Endothelial cell of umbilical vein (primary cell): ENCODE measurements at regions of chr9 and their contacts with region 1.

Region 1: GRCh38 chr9:100598641-100599145 is 20.8 kb downstream of the CAVIN4 start:
- DNase-seq: peak; percentile 77
- H3K4me3 ChIP-seq: peak overlapping the region; percentile 40 to 70 (median 41)
- H3K27ac ChIP-seq: no peak overlapping the region
- H3K4me1 ChIP-seq: peaks cover 12% of the 10 kb centered on the region
- H3K27me3 ChIP-seq: no peaks in the 10 kb centered on the region
- CTCF ChIP-seq: no peak
- POLR2A ChIP-seq: peak; percentile 74

Region 2: DNA sequence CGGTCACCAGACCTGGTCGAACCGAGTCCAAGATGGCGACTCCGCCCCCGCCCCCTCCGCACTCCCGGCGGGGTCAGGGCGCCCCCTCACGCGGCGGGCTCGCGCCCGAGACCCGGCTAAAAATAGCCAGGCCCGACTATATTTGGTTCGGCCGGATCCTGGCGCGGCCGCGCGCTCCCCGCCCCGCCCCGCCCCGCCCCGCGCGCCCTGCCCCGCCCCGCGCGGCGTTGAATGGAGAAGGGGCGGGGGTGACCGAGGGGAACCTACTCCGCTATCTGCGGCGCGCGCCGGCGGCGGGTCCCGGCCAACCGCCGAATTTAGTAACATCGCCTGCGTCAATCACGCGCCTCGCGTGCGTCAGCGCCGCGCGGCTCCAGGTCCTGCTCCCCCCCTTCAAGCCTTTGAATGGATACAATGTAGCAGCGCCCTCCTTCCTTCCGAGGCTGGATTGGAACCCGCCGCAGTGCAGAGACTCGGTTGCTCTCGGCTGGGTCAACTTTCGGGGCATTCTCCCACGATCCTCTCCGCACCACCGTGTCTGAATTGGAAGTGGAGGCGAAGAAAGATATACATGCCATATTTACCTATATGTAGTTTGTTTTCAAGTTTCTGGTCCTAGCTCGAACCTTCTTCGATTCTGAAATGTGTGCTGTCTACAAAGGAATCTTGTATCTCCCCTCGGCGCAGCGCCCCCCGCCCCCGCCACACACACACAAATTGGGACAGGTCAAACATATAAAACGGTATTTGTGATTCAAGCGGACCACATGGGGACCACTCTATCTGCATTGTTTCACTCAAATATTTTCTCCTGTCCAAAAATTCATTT is 778.6 kb before region 1 on chr9:
- CTCF ChIA-PET with region 1: interaction called, 4 read pairs
- POLR2A ChIA-PET with region 1: no interaction called
- dilution Hi-C with region 1: no loop called
- intact Hi-C with region 1: loop called (anchors 5 kb)
- DNase-seq: peak; percentile 93
- H3K4me3 ChIP-seq: peak overlapping the region; percentile 47 to 82 (median 78)
- H3K27ac ChIP-seq: peak overlapping the region; percentile 75
- H3K4me1 ChIP-seq: peaks cover 25% of the 10 kb centered on the region
- H3K27me3 ChIP-seq: peaks cover 8% of the 10 kb centered on the region in 2 experiments
- CTCF ChIP-seq: peak; percentile 4 to 9
- POLR2A ChIP-seq: no peak

Region 3: DNA sequence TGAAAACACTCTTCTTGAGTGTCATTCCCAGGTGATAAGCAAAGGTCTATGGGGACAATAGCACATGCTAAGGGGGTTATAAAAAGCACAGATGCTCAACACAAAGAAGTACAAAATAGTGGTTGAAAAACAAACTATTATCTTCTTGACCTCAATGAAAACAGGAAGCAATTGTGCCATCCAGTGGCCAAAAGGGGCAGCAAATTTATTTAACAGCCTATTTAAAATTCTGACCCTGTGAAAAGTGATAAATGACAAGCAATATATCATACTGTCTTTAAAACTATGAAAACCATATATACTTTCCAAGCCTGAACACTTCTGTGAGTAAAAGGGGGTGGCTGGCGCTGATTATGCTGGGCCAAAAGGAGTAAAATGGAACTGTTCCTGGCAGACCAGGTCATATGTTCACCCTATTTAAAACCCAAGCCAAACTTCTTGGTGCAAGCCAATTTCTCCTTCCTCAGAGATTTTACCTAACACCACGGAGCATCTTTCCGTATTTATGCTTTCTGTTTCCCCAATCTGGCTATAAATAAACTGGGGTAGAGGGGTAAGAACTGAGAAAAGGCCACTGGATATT is 275.6 kb before region 1 on chr9:
- CTCF ChIA-PET with region 1: interaction called, 42 read pairs
- POLR2A ChIA-PET with region 1: no interaction called
- dilution Hi-C with region 1: no loop called
- intact Hi-C with region 1: loop called (anchors 1 kb)
- DNase-seq: peak; percentile 52
- H3K4me3 ChIP-seq: no peak overlapping the region
- H3K27ac ChIP-seq: no peak overlapping the region
- H3K4me1 ChIP-seq: no peaks in the 10 kb centered on the region
- H3K27me3 ChIP-seq: no peaks in the 10 kb centered on the region
- CTCF ChIP-seq: peak; percentile 38 to 50
- POLR2A ChIP-seq: no peak

Region 4: DNA sequence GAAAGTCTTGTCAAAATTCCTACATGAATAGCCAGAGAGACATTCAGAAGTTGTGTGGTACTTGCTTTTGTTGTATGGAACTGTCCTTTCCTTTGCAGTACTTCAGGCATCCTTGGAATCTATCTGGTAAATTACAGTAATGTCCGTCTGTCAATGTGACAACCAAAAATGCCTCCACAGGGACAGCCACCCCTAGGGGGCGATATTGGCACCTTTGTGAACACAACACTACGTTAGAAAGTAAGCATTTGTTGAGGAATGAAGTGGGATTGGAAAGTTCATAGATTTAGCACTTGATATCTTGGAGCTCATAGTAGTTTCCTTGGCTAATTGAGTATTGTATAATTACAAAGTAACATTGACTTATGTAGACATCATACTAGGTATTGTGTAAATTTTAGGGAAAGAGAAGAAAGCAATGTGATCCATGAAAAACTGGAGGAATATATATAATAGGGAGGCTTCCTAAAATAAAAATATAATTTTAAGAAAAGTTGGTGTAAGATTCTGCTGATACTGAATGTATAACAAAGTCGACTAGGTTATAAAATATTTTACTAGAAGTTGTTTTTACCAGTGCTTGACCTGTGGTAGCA is 93.0 kb before region 1 on chr9:
- CTCF ChIA-PET with region 1: interaction called, 12 read pairs
- POLR2A ChIA-PET with region 1: no interaction called
- dilution Hi-C with region 1: no loop called
- intact Hi-C with region 1: loop called (anchors 1 kb)
- DNase-seq: peak; percentile 61
- H3K4me3 ChIP-seq: no peak overlapping the region
- H3K27ac ChIP-seq: no peak overlapping the region
- H3K4me1 ChIP-seq: peaks cover 8% of the 10 kb centered on the region
- H3K27me3 ChIP-seq: no peaks in the 10 kb centered on the region
- CTCF ChIP-seq: peak; percentile 65 to 78
- POLR2A ChIP-seq: no peak

Region 5: GRCh38 chr9:100561256-100561655 is 37.4 kb before region 1 on chr9:
- CTCF ChIA-PET with region 1: no interaction called
- POLR2A ChIA-PET with region 1: no interaction called
- dilution Hi-C with region 1: no loop called
- intact Hi-C with region 1: no loop called
- DNase-seq: no peak
- H3K4me3 ChIP-seq: no peak overlapping the region
- H3K27ac ChIP-seq: no peak overlapping the region
- H3K4me1 ChIP-seq: no peaks in the 10 kb centered on the region
- H3K27me3 ChIP-seq: no peaks in the 10 kb centered on the region
- CTCF ChIP-seq: no peak
- POLR2A ChIP-seq: no peak

Region 6: DNA sequence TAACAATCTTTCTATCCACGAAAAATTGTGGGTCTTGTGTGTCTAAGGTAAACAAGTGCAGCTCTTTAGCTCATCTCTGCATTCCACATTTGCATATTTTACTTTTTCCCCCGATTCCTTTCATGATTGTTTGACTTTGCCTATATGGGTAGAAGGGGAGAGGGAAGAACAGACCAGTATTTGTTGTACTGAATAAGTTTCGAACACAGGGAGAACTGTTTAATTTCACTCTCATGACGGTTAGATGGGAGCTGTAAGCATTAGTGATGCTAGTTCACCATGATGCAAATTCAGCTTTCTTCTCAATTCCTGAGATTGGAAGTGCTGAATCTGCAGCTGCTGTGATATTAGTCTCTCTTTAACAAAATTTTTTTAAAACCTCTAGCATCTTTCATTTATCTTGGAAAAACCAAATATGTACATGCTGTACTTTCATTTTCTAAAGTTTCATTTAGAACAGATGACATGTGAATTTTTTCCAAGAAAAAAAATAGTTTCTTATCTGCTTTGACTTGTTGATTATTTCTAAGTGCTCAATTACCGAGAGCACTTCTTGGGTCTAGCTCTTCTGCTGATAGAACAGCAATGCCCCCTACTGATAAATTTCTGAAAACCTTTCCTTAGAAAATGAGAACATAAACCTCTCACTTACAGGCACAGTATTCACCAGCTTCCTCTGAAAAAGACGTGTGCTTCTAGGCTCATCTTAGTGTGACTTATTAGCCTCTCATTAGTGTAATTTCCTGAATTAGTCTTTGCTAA is 636.6 kb after region 1 on chr9:
- CTCF ChIA-PET with region 1: interaction called, 59 read pairs
- POLR2A ChIA-PET with region 1: no interaction called
- dilution Hi-C with region 1: no loop called
- intact Hi-C with region 1: loop called (anchors 1 kb)
- DNase-seq: peak; percentile 58
- H3K4me3 ChIP-seq: no peak overlapping the region
- H3K27ac ChIP-seq: no peak overlapping the region
- H3K4me1 ChIP-seq: no peaks in the 10 kb centered on the region
- H3K27me3 ChIP-seq: no peaks in the 10 kb centered on the region
- CTCF ChIP-seq: peak; percentile 14 to 38
- POLR2A ChIP-seq: no peak

Region 7: DNA sequence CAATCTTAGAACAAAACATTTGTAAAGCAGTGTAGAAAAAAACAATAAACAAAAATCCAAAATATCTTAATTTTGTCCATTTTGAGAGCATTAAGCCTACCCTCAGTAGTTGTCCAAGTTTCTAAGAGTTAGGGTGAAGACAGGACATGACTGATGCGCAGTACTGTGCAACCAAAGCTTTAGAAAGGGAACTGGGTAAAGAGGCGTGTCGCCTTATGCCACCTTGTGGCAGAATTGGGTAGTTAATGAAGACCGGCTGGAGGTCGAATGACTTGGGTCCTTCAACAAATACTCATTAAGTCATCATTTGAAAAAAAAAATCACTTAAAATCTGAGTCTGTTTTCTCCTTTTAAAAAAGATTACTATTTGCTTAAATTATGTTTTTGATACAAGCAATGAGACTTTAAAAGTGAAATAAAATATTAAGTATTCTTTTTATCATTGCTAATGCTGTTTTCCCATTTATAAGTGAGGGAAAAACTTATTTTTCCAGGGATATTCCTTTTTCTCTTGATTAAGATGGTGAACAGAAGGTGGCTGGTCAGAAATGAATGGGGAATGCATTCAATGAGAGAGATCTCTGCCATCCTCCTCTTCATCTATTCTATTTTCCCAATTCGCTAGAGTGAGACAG is 931.5 kb after region 1 on chr9:
- CTCF ChIA-PET with region 1: interaction called, 10 read pairs
- POLR2A ChIA-PET with region 1: no interaction called
- dilution Hi-C with region 1: no loop called
- intact Hi-C with region 1: loop called (anchors 5 kb)
- DNase-seq: peak; percentile 81
- H3K4me3 ChIP-seq: no peak overlapping the region
- H3K27ac ChIP-seq: no peak overlapping the region
- H3K4me1 ChIP-seq: peaks cover 8% of the 10 kb centered on the region
- H3K27me3 ChIP-seq: no peaks in the 10 kb centered on the region
- CTCF ChIP-seq: peak; percentile 70 to 77
- POLR2A ChIP-seq: no peak